H1 (cell line): ENCODE measurements at regions of chr9 and their contacts with region 1.

Region 1: DNA sequence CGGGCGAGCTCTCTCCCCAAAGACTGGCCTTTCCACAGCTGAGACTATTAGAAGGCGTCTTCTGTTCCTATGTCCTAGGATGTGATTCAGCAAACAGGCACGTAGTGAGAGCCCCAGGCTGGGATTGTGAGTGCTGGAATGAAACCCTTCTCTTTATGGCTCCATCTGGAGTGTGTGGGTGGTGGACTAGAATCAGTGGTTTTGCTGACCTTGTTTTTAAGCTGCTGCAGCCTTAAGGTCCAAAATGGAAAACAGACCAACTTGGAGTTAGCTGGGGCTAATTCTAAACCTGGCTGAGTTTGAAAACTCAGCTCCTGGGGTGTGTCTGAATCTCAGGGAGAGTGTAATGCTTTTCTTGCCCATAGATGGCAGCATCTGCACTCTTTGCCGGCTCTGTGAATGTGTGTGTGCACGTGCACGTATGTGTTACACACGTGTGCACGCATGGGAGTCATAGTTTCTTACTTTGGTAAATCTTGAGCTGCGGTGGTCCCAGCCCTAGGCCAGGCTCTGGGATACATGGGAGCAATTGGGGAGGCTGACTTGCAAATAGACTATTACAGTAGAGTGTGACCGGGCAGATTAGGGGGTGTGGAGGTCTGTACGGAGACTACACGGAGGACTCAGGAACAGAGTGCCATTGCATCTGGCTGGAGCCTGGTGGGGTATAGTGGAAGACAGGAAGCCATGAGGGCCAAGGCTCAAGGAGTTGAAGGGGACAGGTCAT is 10.7 kb downstream of the GSN start:
- DNase-seq: no peak
- H3K4me3 ChIP-seq: no peak overlapping the region
- H3K27ac ChIP-seq: no peak overlapping the region
- H3K4me1 ChIP-seq: peaks cover 0 to 5% (median 2%) of the 10 kb centered on the region in 4 experiments; a peak in 3 of 7 replicates
- H3K27me3 ChIP-seq: peaks cover 6 to 47% (median 39%) of the 10 kb centered on the region in 4 experiments
- CTCF ChIP-seq: peak; percentile 64 to 84 (median 66)
- EP300 ChIP-seq: no peak
- POLR2A ChIP-seq: no peak
- RAD21 ChIP-seq: peak; percentile 73 to 78

Region 2: GRCh38 chr9:121253821-121254471 is 24.8 kb before region 1 on chr9:
- CTCF ChIA-PET with region 1: interaction called, 18 read pairs
- POLR2A ChIA-PET with region 1: interaction called, 3 read pairs
- DNase-seq: no peak
- H3K4me3 ChIP-seq: peak overlapping the region in 1 of 4 experiments; percentile 32; a peak in 2 of 8 replicates
- H3K27ac ChIP-seq: no peak overlapping the region
- H3K4me1 ChIP-seq: peaks cover 0 to 12% (median 4%) of the 10 kb centered on the region in 4 experiments; a peak in 5 of 7 replicates
- H3K27me3 ChIP-seq: peaks cover 0 to 15% (median 7%) of the 10 kb centered on the region in 4 experiments; a peak in 6 of 7 replicates
- CTCF ChIP-seq: no peak
- EP300 ChIP-seq: no peak
- POLR2A ChIP-seq: no peak
- RAD21 ChIP-seq: 0 out of 4 replicates have a peak, but pooled peaks of 1 of the 2 experiments have one; percentile 3

Region 3: DNA sequence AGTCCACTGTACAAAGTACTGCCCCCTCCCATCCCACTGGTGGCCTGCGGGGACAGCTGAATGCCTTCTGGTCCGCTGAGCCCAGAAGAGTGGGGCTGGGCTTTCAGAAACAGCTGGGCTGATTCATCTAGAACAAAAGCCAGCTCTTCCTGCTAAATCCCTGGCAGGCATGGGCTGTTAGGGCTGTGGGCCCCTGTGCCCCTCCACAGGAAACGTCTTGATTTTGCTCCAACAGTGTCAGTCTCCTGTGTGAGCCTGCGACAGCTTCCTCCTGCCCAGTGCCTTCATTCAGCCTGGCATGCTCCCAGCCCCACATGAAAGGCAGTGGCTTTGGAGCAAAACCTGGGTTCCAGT is 17.6 kb before region 1 on chr9:
- CTCF ChIA-PET with region 1: interaction called, 18 read pairs
- POLR2A ChIA-PET with region 1: interaction called, 5 read pairs
- DNase-seq: no peak
- H3K4me3 ChIP-seq: no peak overlapping the region
- H3K27ac ChIP-seq: no peak overlapping the region
- H3K4me1 ChIP-seq: peaks cover 4 to 14% (median 6%) of the 10 kb centered on the region in 4 experiments; a peak in 4 of 7 replicates
- H3K27me3 ChIP-seq: peaks cover 0 to 10% (median 6%) of the 10 kb centered on the region in 4 experiments; a peak in 6 of 7 replicates
- CTCF ChIP-seq: no peak
- EP300 ChIP-seq: no peak
- POLR2A ChIP-seq: no peak
- RAD21 ChIP-seq: no peak

Region 4: DNA sequence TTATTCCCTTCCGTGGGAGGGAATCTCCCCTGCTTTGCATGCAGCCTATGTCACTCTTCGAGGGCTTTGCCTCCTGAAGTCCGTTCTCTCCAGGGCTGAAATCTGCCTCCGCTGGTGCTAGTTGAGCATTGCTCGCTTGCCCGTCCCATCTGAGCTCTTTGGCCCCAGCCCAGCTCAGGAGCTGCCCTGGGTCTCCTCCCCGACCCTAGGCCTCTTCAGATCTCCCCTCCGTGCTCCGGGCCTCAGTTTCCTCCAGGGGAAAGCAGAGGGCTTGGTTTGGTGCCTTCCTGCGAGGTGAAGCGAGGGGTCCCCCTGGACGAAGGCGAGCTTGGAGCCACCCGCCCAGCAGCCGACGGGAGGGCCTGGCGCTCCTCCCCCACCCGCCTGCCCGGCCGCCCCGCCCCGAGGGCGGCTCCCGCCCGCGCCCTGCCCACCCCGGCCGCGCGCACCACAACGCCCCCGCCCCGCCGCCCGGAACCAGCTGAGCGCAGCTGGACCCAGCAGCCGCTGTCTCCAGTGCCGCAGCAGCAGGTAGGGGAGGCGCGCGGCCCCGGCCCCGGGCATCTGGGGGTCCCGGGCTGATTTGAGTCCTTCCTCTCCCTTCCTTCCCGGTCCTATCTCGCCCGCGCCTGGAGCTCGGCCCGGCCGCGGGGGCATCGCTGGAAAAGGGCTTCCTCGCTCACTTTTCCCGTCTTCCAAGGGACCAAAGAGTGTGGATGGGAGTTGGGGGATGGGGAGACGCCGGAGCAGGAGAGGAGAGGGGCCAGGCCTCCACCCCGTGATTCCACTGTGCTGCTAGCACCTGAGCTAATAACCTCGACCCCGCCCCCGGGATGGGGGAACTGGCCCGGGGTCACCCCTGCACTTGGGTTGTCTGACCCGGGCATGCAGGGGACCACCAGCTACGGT is 10.8 kb before region 1 on chr9 and contains the start of gene GSN:
- CTCF ChIA-PET with region 1: interaction called, 53 read pairs
- POLR2A ChIA-PET with region 1: no interaction called
- DNase-seq: peak in 1 of 2 experiments; percentile 86
- H3K4me3 ChIP-seq: peak within 1 kb of the TSS; percentile 63 to 94 (median 72)
- H3K27ac ChIP-seq: no peak within 1 kb of the TSS
- H3K4me1 ChIP-seq: peaks cover 4 to 31% (median 12%) of the 10 kb centered on the region in 4 experiments
- H3K27me3 ChIP-seq: peaks cover 0 to 30% (median 22%) of the 10 kb centered on the region in 4 experiments; a peak in 6 of 7 replicates
- CTCF ChIP-seq: peak in 2 of 3 experiments; percentile 0 to 32; a peak in 2 of 4 replicates
- EP300 ChIP-seq: no peak
- POLR2A ChIP-seq: 0 out of 3 replicates have a peak, but pooled peaks of 1 of the 2 experiments have one; percentile 8
- RAD21 ChIP-seq: peak in 1 of 2 experiments; percentile 7; a peak in 2 of 4 replicates
- total RNA-seq, gene GSN: 49.7 and 52.3 TPM in 2 replicates

Region 5: GRCh38 chr9:121299467-121300234 is 21.0 kb after region 1 on chr9:
- CTCF ChIA-PET with region 1: interaction called, 22 read pairs
- POLR2A ChIA-PET with region 1: interaction called, 7 read pairs
- DNase-seq: peak in 1 of 2 experiments; percentile 62
- H3K4me3 ChIP-seq: peak overlapping the region; percentile 29 to 63 (median 38)
- H3K27ac ChIP-seq: no peak overlapping the region
- H3K4me1 ChIP-seq: peaks cover 5 to 19% (median 12%) of the 10 kb centered on the region in 4 experiments
- H3K27me3 ChIP-seq: peaks cover 5 to 20% (median 14%) of the 10 kb centered on the region in 4 experiments
- CTCF ChIP-seq: no peak
- EP300 ChIP-seq: no peak
- POLR2A ChIP-seq: no peak
- RAD21 ChIP-seq: no peak

Region 6: DNA sequence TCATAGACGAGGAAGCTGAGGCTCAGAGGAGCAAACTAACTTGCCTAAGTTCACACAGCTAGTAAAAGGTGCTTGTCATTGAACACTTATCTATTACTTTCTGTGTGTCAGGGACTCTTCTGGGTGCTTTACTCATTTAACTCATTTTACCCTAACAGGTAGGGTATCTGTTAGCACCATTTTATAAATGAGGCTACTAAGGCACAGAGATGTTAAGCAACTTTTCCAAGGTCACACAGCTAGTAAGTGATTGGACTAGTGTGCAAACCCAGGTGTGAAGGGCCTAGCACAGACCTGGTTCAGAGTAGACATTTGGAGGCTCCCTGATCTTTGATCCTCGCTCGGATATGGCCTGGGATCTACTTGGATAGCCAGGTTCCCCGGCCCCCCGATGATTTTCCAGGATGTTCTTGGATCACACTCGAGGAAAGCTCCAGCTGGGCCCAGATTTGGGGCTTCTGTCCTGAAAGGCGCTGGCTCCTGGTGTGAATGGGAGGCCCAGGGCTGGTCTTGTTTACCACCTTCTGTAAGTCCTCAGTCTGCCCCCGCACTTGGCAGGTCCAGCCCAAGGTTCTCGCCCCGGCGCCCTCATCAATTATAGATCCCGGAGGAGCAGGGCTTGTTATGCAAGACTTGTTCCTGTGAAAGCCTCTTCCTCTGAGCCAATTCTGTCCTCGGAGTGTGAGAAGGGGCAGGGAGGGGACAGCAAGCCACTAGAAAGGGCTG is 26.7 kb after region 1 on chr9:
- CTCF ChIA-PET with region 1: interaction called, 22 read pairs
- POLR2A ChIA-PET with region 1: no interaction called
- DNase-seq: no peak
- H3K4me3 ChIP-seq: no peak overlapping the region
- H3K27ac ChIP-seq: no peak overlapping the region
- H3K4me1 ChIP-seq: peaks cover 2 to 10% (median 4%) of the 10 kb centered on the region in 4 experiments; a peak in 6 of 7 replicates
- H3K27me3 ChIP-seq: peaks cover 5 to 14% (median 9%) of the 10 kb centered on the region in 4 experiments
- CTCF ChIP-seq: no peak
- EP300 ChIP-seq: no peak
- POLR2A ChIP-seq: no peak
- RAD21 ChIP-seq: no peak

Region 7: DNA sequence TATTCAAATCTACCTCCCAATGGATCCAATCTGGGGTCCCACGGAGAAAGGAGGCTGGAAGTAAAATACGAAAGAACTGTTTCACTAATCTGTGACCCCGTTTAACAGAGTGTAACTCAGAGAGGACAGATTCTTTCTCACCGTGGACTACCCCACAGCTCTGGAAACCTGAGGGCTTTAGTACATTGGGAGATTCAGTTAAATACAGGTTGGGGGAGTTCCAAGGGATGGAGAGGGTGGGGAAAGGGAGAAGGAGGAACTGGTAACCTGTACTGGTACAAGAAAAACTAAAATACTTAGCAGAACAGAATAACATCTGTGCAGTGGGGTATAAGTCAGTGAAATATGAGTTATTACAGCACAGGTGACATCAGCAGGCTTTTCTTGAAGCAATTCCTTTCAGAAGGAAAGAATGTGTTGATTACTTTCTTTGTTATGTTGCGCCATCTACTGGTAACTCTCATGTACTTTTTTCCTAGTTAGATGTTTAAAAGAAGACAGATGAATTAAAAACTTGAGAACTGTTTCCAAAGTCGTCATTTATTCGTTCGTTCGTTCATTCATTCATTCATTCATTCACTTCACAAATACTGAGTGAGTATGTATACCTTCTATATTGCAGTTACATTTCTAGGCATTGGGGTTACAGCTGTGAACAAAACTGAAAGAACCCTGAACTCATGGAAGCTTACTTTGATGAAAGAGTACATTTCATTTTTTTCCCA is 121.3 kb after region 1 on chr9:
- CTCF ChIA-PET with region 1: interaction called, 15 read pairs
- POLR2A ChIA-PET with region 1: no interaction called
- DNase-seq: no peak
- H3K4me3 ChIP-seq: no peak overlapping the region
- H3K27ac ChIP-seq: no peak overlapping the region
- H3K4me1 ChIP-seq: peaks cover 0 to 6% (median 0%) of the 10 kb centered on the region in 4 experiments; a peak in 1 of 7 replicates
- H3K27me3 ChIP-seq: no peaks in the 10 kb centered on the region
- CTCF ChIP-seq: peak in 2 of 3 experiments; percentile 49 to 61; a peak in 2 of 4 replicates
- EP300 ChIP-seq: no peak
- POLR2A ChIP-seq: no peak
- RAD21 ChIP-seq: peak; percentile 77 to 84